ENCODE measurements at regions of chr6 and their contacts with region 1.

Region 1: DNA sequence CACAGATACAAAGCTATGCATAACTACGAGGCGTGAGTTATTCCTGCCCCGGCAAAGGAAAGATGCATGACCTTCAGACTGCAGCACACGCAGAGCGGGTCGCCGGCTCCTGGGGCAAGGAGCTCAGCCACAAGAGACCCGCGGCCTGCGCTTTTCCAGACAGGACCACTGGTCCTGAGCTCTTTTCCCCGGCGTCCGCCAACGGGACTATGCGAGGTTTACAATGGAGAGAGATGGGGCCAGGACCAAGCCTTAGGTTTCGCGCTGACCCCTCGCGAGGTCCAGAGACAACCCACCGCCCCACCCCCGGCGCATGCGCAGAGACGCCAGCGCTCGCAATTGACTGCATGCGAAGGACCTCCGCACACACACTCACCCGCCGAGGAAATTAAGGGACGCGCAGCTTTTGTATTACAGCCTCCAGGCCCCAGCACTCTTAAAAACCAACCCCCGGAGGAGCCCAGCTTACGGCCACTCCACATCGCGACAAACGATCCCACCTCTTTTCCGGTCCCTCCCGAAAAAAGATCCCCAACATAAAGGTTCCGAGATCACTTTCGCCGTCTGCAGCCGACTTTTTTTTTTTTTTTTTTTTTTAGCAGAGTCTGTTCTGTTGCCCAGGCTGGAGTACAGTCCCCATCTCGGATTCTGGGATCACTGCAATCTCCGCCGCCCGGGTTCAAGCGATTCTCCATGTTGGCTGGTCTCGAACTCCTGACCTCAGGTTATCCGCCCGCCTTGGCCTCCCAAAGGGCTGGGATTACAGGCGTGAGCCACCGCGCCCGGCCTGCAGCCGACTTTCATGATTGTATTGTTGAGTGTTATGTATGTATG is at the start of gene COQ3:
- DNase-seq: peak; percentile 65
- H3K4me3 ChIP-seq: peak within 1 kb of the TSS; percentile 74 to 88 (median 84)
- H3K27ac ChIP-seq: peak within 1 kb of the TSS; percentile 69
- H3K4me1 ChIP-seq: no peaks in the 10 kb centered on the region
- H3K27me3 ChIP-seq: no peaks in the 10 kb centered on the region
- CTCF ChIP-seq: no peak
- total RNA-seq, gene COQ3: 4.3 to 12.8 TPM

Region 2: GRCh38 chr6:99349171-99350141 is 44.5 kb before region 1 on chr6 and contains the start of gene FAXC:
- CTCF ChIA-PET with region 1: no interaction called
- dilution Hi-C with region 1: no loop called
- in situ Hi-C with region 1: loop called in 1 of 2 experiments (anchors 10 kb)
- intact Hi-C with region 1: loop called (anchors 2 kb)
- DNase-seq: peak; percentile 69
- H3K4me3 ChIP-seq: peak within 1 kb of the TSS; percentile 63 to 87 (median 64)
- H3K27ac ChIP-seq: peak within 1 kb of the TSS; percentile 36
- H3K4me1 ChIP-seq: peaks cover 19% of the 10 kb centered on the region
- H3K27me3 ChIP-seq: no peaks in the 10 kb centered on the region
- CTCF ChIP-seq: peak; percentile 18 to 48
- total RNA-seq, gene FAXC: 7.2 to 7.6 TPM

Region 3: DNA sequence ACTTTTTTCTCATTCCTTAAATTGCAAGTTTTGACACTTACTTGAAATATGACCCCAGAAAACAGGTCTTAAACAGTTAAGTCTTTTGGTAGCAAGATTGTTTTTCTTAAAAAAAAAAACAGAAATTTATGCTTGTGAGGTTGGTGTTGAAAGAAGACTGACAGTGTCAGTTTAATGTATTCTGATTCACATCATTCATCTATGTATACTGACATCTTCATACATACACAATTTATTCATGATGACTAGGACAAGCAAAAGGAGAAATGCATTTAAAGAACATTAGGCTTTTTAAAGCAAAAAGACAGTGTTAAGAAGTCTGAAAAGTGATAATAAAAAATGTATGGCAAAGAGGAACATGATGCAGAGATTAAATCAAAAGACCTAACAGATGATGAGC is 573.1 kb after region 1 on chr6:
- CTCF ChIA-PET with region 1: no interaction called
- dilution Hi-C with region 1: no loop called
- in situ Hi-C with region 1: no loop called
- intact Hi-C with region 1: no loop called
- DNase-seq: no peak
- H3K4me3 ChIP-seq: no peak overlapping the region
- H3K27ac ChIP-seq: no peak overlapping the region
- H3K4me1 ChIP-seq: no peaks in the 10 kb centered on the region
- H3K27me3 ChIP-seq: no peaks in the 10 kb centered on the region
- CTCF ChIP-seq: no peak

Measured in mammary epithelial cell (primary cell).